Activated CD4-positive, alpha-beta memory T cell treated with anti-CD3 and anti-CD28 coated beads for 36 hours (primary cell): ENCODE measurements at regions of chr11 and their contacts with region 1.

Region 1: DNA sequence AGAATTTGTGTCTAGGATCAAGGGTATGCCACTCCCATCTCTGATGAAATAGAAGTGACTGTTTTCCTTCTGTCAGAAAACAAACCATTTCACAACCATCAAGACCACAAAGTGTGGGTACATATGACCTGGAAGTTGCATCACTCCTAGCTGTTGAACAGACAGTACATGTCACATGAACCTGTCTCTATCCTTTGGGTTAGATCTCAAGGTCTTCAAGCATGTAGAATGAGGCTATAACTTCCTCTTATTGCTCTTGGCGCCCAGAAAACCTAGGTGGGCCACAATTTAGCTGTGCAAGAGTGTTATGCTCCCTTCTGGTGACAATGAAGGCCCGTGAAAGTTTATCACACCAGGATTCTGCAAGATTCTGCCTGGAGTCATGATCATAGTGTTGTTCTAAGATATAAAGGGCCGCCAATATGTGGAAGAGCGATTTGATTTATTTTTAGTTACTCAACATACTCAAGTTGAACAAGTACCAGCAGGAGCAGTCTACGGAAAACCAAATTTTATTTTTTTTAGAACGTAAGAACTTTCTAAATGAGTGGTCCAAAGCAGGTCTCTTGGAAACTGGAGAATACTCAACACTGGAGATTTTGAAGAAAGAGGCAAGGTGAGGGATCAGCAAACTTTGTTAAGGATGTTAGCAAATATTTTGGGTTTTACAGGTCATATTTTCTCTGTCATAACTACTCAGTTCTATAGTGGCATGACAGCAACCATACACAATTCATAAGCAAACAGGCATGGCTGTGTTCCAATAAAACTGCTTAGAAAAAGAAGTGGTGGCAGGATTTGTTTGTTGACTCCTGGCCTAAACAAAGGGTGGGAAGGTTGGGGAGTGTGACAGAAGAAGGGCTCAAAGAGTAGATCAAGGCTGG is 101.8 kb downstream of the USP35 start:
- DNase-seq: peak; percentile 33
- H3K4me3 Mint-ChIP-seq: peak overlapping the region; percentile 2
- H3K27ac Mint-ChIP-seq: peak overlapping the region; percentile 83
- H3K4me1 Mint-ChIP-seq: peaks cover 34% of the 10 kb centered on the region
- H3K27me3 Mint-ChIP-seq: no peaks in the 10 kb centered on the region

Region 2: DNA sequence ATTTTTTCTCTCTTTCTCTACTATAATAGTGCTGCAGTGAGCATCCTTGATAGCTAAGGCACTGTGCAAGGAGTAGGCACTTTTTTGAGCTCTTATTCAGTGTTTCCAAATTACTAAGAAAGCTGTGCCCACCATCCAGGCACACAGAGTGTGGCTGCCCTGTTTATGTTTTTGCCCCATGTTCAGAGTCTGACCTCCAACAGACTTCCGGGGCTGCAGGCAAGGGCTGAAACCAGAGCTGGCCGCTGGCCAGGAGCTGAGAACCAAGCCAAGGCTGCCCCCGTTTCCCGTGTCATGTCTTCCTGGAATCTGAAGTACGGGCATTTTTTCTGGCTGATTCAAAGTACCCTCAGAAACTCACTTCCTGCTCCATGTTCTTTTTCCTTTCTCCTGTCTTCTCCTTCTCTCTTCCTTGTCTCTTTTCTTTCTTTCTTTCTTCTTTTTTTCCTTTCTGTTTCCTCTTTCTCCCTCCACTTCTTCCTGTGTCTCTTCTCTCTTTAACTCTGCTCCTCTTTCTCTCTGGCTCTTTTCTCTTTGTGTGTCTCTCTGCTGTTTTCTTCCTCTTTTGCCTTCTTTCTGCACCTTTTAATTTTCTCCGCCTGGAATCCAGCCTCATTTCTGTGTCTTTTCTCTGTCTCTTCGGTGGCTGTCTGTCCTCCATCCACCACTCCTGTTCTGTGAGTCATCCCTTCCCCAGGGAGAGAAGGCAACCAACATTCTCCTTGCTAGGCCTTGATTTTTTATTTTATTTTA is 250.4 kb before region 1 on chr11:
- CTCF ChIA-PET with region 1: no interaction called
- POLR2A ChIA-PET with region 1: no interaction called
- intact Hi-C with region 1: no loop called
- DNase-seq: peak; percentile 68
- H3K4me3 Mint-ChIP-seq: peak overlapping the region; percentile 6
- H3K27ac Mint-ChIP-seq: peak overlapping the region; percentile 80
- H3K4me1 Mint-ChIP-seq: peaks cover 12% of the 10 kb centered on the region
- H3K27me3 Mint-ChIP-seq: no peaks in the 10 kb centered on the region

Region 3: GRCh38 chr11:78202733-78203167 is 87.8 kb before region 1 on chr11:
- CTCF ChIA-PET with region 1: no interaction called
- POLR2A ChIA-PET with region 1: no interaction called
- intact Hi-C with region 1: loop called (anchors 5 kb)
- DNase-seq: peak; percentile 69
- H3K4me3 Mint-ChIP-seq: peak overlapping the region; percentile 63
- H3K27ac Mint-ChIP-seq: peak overlapping the region; percentile 90
- H3K4me1 Mint-ChIP-seq: peaks cover 37% of the 10 kb centered on the region
- H3K27me3 Mint-ChIP-seq: no peaks in the 10 kb centered on the region

Region 4: GRCh38 chr11:78268591-78269410 is 21.7 kb before region 1 on chr11:
- CTCF ChIA-PET with region 1: no interaction called
- POLR2A ChIA-PET with region 1: no interaction called
- intact Hi-C with region 1: no loop called
- DNase-seq: no peak
- H3K4me3 Mint-ChIP-seq: no peak overlapping the region
- H3K27ac Mint-ChIP-seq: no peak overlapping the region
- H3K4me1 Mint-ChIP-seq: no peaks in the 10 kb centered on the region
- H3K27me3 Mint-ChIP-seq: no peaks in the 10 kb centered on the region

Region 5: GRCh38 chr11:78310500-78310909 is 20.0 kb after region 1 on chr11:
- CTCF ChIA-PET with region 1: no interaction called
- POLR2A ChIA-PET with region 1: no interaction called
- intact Hi-C with region 1: loop called (anchors 1 kb)
- DNase-seq: no peak
- H3K4me3 Mint-ChIP-seq: no peak overlapping the region
- H3K27ac Mint-ChIP-seq: no peak overlapping the region
- H3K4me1 Mint-ChIP-seq: peaks cover 13% of the 10 kb centered on the region
- H3K27me3 Mint-ChIP-seq: no peaks in the 10 kb centered on the region

Region 6: DNA sequence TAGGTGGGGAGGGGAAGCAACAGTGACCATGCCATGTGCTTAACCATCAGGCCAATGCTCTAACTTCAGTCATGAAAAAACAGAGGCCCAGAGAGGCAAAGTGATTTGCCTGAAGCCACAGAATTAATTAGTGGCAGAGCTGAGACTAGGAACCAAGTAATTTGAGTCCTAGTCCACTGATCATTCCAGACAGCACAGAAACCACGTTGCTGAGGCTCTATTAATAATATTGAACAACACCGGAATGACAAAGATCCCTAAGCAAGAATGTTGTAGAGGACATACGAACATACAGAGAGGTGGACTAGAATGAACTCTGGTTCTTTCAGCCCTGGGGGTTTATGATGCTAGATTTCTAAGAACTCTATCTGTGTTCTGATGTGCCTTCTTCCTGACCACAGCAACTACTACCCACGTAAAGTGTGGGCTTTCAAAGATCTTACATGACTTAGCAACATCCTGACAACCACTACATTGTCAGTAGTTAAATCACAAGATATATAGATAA is 34.8 kb after region 1 on chr11:
- CTCF ChIA-PET with region 1: interaction called, 4 read pairs
- POLR2A ChIA-PET with region 1: interaction called, 7 read pairs
- intact Hi-C with region 1: loop called (anchors 1 kb)
- DNase-seq: peak; percentile 16
- H3K4me3 Mint-ChIP-seq: no peak overlapping the region
- H3K27ac Mint-ChIP-seq: peak overlapping the region; percentile 77
- H3K4me1 Mint-ChIP-seq: peaks cover 40% of the 10 kb centered on the region
- H3K27me3 Mint-ChIP-seq: no peaks in the 10 kb centered on the region